PC-9 (cell line): ENCODE measurements at regions of chr5 and their contacts with region 1.

Region 1: DNA sequence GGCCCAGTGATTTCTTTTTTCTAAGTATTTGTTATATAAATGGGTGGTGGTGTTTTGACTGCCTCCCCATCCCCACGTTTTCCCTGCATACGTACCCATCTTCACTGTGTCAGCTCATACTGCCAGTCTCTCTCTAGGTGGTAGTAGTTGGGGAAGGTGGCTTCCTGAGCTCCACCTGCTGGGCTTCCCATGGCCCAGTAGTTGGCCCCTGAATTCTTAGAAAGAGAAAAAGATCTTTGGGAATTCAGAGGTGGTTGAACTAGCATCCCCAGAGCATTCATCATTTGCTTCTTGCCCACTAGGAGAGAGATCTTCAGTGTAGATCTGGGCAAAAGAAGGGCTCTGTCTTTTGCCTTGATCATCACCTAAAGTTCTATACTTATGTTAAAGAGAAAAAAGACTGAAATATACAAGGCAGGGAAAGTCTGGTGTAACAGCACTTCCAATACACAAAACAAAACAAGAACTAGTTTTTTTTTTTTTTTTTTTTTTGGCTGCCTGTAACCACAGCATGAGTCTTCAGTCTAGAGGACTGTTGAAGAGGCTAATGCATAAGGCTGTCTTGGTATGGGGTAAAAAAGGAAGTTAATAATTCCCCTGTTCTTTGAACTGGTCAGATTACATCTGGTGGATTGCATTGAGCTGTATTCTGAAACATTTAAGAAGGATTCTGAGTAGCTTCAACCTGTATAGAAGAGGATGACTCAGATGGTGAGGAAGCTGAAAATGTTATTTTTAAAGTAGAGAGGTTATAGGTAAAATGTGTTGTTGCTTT is 128.7 kb downstream of the ATG10 start:
- DNase-seq: no peak
- H3K4me3 ChIP-seq: no peak overlapping the region
- H3K27ac ChIP-seq: no peak overlapping the region
- H3K4me1 ChIP-seq: no peaks in the 10 kb centered on the region
- H3K27me3 ChIP-seq: no peaks in the 10 kb centered on the region
- CTCF ChIP-seq: no peak

Region 2: DNA sequence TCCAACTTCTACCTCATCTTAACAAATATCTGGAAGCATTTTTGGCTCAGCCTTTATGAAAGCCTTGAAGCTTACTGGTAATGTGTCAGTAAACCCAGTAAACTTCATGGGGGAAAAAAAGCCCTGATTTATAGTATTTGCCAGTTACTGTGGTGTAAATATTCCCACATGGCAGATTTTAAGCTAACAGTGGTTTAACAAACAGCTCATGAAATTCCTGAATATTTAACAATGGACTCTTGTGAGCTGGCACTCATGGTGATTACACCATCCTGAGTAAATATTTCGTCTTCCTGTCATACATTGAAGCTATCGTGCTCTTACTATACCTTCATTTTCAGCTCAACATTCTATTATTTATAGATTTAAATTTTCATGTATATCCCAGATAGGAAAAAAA is 649.5 kb before region 1 on chr5:
- CTCF ChIA-PET with region 1: no interaction called
- POLR2A ChIA-PET with region 1: interaction called, 25 read pairs
- intact Hi-C with region 1: no loop called
- DNase-seq: no peak
- H3K4me3 ChIP-seq: no peak overlapping the region
- H3K27ac ChIP-seq: no peak overlapping the region
- H3K4me1 ChIP-seq: no peaks in the 10 kb centered on the region; the same call in 1 of the 2 replicates
- H3K27me3 ChIP-seq: no peaks in the 10 kb centered on the region
- CTCF ChIP-seq: no peak

Region 3: DNA sequence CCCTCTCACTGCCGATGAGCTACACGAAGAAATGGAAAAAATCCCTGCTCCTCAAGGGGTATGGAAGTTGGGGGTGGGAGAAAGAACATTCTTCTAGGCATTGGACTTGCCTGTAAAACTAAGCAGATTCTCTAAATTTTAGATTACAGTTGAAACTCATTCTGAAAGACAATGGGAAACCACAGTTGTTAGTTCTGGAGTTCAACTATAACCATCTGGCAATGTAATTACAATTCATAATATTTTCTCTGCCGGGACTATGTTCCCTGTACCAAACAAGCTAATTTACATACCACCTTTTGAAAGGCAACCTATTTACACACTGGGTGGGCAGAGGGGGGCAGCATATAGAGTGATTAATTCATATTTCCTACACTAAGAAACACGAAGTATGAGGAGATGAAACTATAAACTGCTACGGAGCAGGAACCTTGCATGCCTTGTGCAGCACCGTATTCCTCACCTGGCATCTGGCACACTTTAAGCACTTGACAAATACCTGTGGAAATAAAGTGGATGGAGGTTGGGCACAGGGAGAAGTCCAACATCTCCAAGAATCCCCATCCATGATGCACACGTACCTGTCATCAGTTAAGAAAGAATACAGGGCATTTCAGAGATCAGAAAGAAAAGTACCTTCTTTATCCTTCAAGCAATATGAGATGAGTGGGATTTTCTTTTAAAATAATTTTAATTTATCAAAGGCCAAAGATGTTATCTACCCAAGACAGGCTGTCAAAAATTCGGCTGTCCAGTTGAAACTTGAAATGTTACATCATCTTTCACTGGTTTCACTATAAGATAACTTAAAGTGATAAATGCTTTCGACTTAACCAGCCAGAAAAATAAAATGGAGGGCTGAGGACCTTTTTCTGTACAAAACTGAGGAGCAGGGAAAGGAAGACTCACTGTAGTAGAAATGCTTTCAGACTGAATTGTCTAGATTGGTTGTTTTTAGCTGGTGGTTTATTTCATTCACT is 403.8 kb before region 1 on chr5:
- CTCF ChIA-PET with region 1: no interaction called
- POLR2A ChIA-PET with region 1: no interaction called
- intact Hi-C with region 1: no loop called
- DNase-seq: no peak
- H3K4me3 ChIP-seq: no peak overlapping the region
- H3K27ac ChIP-seq: no peak overlapping the region
- H3K4me1 ChIP-seq: no peaks in the 10 kb centered on the region
- H3K27me3 ChIP-seq: no peaks in the 10 kb centered on the region
- CTCF ChIP-seq: no peak

Region 4: GRCh38 chr5:81904861-81905260 is 195.6 kb before region 1 on chr5:
- CTCF ChIA-PET with region 1: no interaction called
- POLR2A ChIA-PET with region 1: interaction called, 24 read pairs
- intact Hi-C with region 1: no loop called
- DNase-seq: peak; percentile 19 to 63
- H3K4me3 ChIP-seq: no peak overlapping the region
- H3K27ac ChIP-seq: no peak overlapping the region
- H3K4me1 ChIP-seq: peaks cover 12% of the 10 kb centered on the region; the same call in 1 of the 2 replicates
- H3K27me3 ChIP-seq: no peaks in the 10 kb centered on the region
- CTCF ChIP-seq: no peak

Region 5: DNA sequence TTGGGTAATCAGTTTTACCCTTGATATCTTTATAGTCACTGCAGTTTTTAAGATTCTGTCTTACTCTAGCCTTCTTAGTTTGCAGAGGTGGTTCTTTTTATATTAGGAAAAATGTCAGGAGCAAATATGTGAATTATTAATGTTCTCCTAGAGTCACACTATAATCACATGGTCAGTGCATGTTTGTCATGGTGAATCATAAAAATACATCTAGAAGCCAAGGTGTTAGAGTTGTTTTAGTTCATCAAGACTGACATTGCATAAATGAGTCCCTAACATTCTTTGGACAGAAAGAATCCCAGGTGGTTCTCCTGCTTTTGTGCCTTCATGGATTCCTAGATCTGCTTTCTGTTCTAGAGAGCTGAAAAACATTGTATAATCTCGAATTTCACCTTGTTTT is 105.8 kb before region 1 on chr5:
- CTCF ChIA-PET with region 1: no interaction called
- POLR2A ChIA-PET with region 1: no interaction called
- intact Hi-C with region 1: no loop called
- DNase-seq: no peak
- H3K4me3 ChIP-seq: no peak overlapping the region
- H3K27ac ChIP-seq: no peak overlapping the region
- H3K4me1 ChIP-seq: no peaks in the 10 kb centered on the region
- H3K27me3 ChIP-seq: no peaks in the 10 kb centered on the region
- CTCF ChIP-seq: no peak